IMR-90 (cell line): ENCODE measurements at regions of chr1 and their contacts with region 1.

Region 1: DNA sequence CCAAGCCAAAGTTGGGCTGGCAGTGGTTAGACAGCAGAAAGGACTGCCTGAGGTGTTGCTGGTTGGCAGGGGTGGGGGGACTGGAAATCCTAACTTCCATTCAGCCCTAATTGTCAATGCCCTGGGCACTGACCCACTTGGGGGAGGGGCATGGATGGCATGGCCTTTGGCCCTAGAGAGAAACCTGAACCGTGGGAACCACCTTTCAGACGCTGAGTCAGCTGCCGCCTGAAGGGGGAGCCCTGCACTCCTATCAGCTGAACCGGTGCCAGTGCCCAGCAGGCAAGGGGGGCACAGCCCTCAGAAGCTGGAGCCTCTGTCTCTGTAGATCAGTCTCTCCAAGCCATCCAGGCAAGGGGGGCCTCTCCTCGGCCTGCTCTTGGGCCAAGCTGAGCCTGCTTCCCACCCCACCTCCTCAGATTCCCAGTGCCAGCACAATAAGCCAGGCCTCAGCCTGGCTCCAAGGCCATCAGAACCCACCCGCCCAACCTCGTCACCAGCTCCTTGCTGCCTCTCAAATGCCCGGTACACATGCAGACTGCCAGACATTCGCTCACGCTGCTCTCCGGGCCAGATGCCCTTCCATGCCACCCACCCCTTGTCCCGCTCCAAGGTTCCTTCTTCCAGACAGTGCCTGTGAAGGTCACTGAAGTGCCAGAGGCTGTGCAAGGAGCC is 11.5 kb downstream of the TINAGL1 start:
- DNase-seq: no peak
- ATAC-seq: peak; percentile 67
- H3K4me3 ChIP-seq: no peak overlapping the region
- H3K27ac ChIP-seq: no peak overlapping the region
- H3K4me1 ChIP-seq: peaks cover 7% of the 10 kb centered on the region; the same call in 1 of the 2 replicates
- H3K27me3 ChIP-seq: peaks cover 19% of the 10 kb centered on the region
- CTCF ChIP-seq: peak; percentile 53
- POLR2A ChIP-seq: no peak
- RAD21 ChIP-seq: no peak

Region 2: GRCh38 chr1:31573261-31573660 is 14.6 kb before region 1 on chr1:
- CTCF ChIA-PET with region 1: no interaction called
- POLR2A ChIA-PET with region 1: interaction called, 30 read pairs
- dilution Hi-C with region 1: no loop called
- in situ Hi-C with region 1: no loop called
- intact Hi-C with region 1: no loop called
- DNase-seq: no peak
- ATAC-seq: no peak
- H3K4me3 ChIP-seq: no peak overlapping the region
- H3K27ac ChIP-seq: no peak overlapping the region
- H3K4me1 ChIP-seq: peaks cover 17% of the 10 kb centered on the region
- H3K27me3 ChIP-seq: no peaks in the 10 kb centered on the region
- CTCF ChIP-seq: no peak
- POLR2A ChIP-seq: no peak
- RAD21 ChIP-seq: no peak

Region 3: GRCh38 chr1:31781756-31782371 is 194.0 kb after region 1 on chr1:
- CTCF ChIA-PET with region 1: no interaction called
- POLR2A ChIA-PET with region 1: no interaction called
- dilution Hi-C with region 1: no loop called
- in situ Hi-C with region 1: no loop called
- intact Hi-C with region 1: no loop called
- DNase-seq: no peak
- ATAC-seq: peak; percentile 21; the same call in 1 of the 2 replicates
- H3K4me3 ChIP-seq: no peak overlapping the region
- H3K27ac ChIP-seq: no peak overlapping the region
- H3K4me1 ChIP-seq: peaks cover 10% of the 10 kb centered on the region
- H3K27me3 ChIP-seq: peaks cover 7% of the 10 kb centered on the region; the same call in 1 of the 2 replicates
- CTCF ChIP-seq: no peak
- POLR2A ChIP-seq: no peak
- RAD21 ChIP-seq: no peak